ENCODE measurements at regions of chr15 and their contacts with region 1.

Region 1: DNA sequence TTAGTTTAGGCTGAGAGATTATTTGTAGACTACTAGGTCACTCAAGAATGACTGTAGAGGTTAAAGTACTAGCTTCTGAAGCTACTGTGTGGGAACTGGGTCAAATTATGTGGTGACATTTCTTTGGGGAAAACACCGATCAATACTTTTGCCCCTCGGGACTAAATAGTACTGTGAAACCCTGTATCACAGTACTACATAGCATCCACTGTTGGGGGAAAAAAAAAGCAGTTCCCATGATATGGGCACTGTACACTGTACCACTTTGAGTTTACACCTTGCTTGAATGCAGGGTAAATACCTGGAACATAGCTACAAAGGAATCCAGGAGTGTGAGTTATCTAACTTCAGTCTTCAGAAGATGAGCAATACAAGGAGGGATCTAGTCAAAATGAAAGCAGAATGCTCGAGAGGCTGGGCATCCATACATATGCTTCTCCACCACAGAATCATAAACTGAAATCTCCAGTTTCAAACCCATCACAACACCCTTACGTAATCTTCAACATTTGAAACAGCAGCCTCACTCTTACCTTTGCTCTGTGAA is 311.4 kb downstream of the UNC13C start:
- DNase-seq: peak; percentile 77
- ATAC-seq: peak; percentile 85
- H3K4me3 ChIP-seq: no peak overlapping the region
- H3K27ac ChIP-seq: no peak overlapping the region
- H3K4me1 ChIP-seq: no peaks in the 10 kb centered on the region
- H3K27me3 ChIP-seq: no peaks in the 10 kb centered on the region
- CTCF ChIP-seq: no peak
- EP300 ChIP-seq: peak; percentile 75 to 91; a peak in 3 of 4 replicates
- POLR2A ChIP-seq: no peak
- RAD21 ChIP-seq: no peak

Region 2: GRCh38 chr15:53982876-53983275 is 306.8 kb before region 1 on chr15:
- CTCF ChIA-PET with region 1: interaction called, 6 read pairs
- POLR2A ChIA-PET with region 1: interaction called, 3 read pairs
- RAD21 ChIA-PET with region 1: interaction called, 4 read pairs
- SMC1A ChIA-PET with region 1: interaction called, 12 read pairs
- in situ Hi-C with region 1: no loop called
- intact Hi-C with region 1: loop called (anchors 5 kb)
- DNase-seq: no peak
- ATAC-seq: no peak; the same call in 2 of the 3 replicates
- H3K4me3 ChIP-seq: no peak overlapping the region
- H3K27ac ChIP-seq: no peak overlapping the region
- H3K4me1 ChIP-seq: no peaks in the 10 kb centered on the region
- H3K27me3 ChIP-seq: no peaks in the 10 kb centered on the region
- CTCF ChIP-seq: no peak
- EP300 ChIP-seq: no peak
- POLR2A ChIP-seq: no peak
- RAD21 ChIP-seq: no peak

Region 3: GRCh38 chr15:54101664-54102270 is 187.9 kb before region 1 on chr15:
- CTCF ChIA-PET with region 1: no interaction called
- POLR2A ChIA-PET with region 1: interaction called, 3 read pairs
- RAD21 ChIA-PET with region 1: interaction called, 14 read pairs
- SMC1A ChIA-PET with region 1: interaction called, 8 read pairs
- in situ Hi-C with region 1: no loop called
- intact Hi-C with region 1: no loop called
- DNase-seq: no peak
- ATAC-seq: peak; percentile 17
- H3K4me3 ChIP-seq: no peak overlapping the region
- H3K27ac ChIP-seq: no peak overlapping the region
- H3K4me1 ChIP-seq: no peaks in the 10 kb centered on the region
- H3K27me3 ChIP-seq: no peaks in the 10 kb centered on the region
- CTCF ChIP-seq: no peak
- EP300 ChIP-seq: no peak
- POLR2A ChIP-seq: no peak
- RAD21 ChIP-seq: no peak

Region 4: GRCh38 chr15:54304321-54304720 is 14.7 kb after region 1 on chr15:
- CTCF ChIA-PET with region 1: interaction called, 3 read pairs
- POLR2A ChIA-PET with region 1: interaction called, 3 read pairs
- RAD21 ChIA-PET with region 1: interaction called, 34 read pairs
- SMC1A ChIA-PET with region 1: interaction called, 38 read pairs
- in situ Hi-C with region 1: no loop called
- intact Hi-C with region 1: no loop called
- DNase-seq: no peak
- ATAC-seq: no peak
- H3K4me3 ChIP-seq: no peak overlapping the region
- H3K27ac ChIP-seq: no peak overlapping the region
- H3K4me1 ChIP-seq: no peaks in the 10 kb centered on the region
- H3K27me3 ChIP-seq: no peaks in the 10 kb centered on the region
- CTCF ChIP-seq: no peak
- EP300 ChIP-seq: no peak
- POLR2A ChIP-seq: no peak
- RAD21 ChIP-seq: no peak

Region 5: DNA sequence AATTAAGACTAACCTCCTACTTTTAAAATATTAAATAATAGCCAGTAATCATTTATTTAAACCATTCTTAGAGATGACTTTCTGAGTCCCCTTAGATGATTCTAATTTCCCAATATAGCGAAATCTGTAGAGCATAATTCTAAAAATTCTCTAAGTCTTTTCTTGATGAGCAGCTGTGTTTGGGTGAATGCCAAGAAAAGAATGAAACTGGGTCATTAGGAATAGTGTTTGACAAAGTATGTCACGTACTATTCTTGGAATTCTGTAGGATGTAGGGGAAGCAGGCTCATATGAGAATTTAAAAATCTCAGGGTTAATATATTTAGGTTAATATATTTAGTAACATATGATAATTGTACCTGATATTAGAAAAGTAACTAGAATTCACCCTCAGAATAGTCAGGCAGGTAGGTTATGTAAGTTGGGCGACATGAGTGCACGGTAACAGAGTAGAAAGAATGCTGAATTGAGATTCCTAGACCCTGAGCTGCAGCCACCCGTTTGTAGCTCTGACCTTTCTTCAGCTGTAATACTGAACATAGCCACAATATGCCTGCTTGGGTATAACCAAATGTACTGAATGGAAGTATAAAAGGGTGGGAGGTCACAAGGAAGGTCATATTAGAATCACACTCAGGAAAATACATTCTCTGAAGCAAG is 212.9 kb after region 1 on chr15:
- CTCF ChIA-PET with region 1: no interaction called
- POLR2A ChIA-PET with region 1: no interaction called
- RAD21 ChIA-PET with region 1: interaction called, 13 read pairs
- SMC1A ChIA-PET with region 1: interaction called, 6 read pairs
- in situ Hi-C with region 1: no loop called
- intact Hi-C with region 1: no loop called
- DNase-seq: no peak
- ATAC-seq: peak; percentile 44
- H3K4me3 ChIP-seq: no peak overlapping the region
- H3K27ac ChIP-seq: no peak overlapping the region
- H3K4me1 ChIP-seq: no peaks in the 10 kb centered on the region
- H3K27me3 ChIP-seq: no peaks in the 10 kb centered on the region
- CTCF ChIP-seq: no peak
- EP300 ChIP-seq: no peak
- POLR2A ChIP-seq: no peak
- RAD21 ChIP-seq: no peak

Measured in GM12878 (cell line).